ENCODE measurements at regions of chrX and their contacts with region 1.

Region 1: GRCh38 chrX:103686199-103687072 is at the start of gene MORF4L2:
- DNase-seq: peak; percentile 84 to 93 (median 87)
- H3K4me3 ChIP-seq: peak within 1 kb of the TSS; percentile 56
- H3K27ac ChIP-seq: peak within 1 kb of the TSS; percentile 91 to 92
- H3K4me1 ChIP-seq: no peaks in the 10 kb centered on the region
- H3K27me3 ChIP-seq: no peaks in the 10 kb centered on the region
- CTCF ChIP-seq: no peak
- EP300 ChIP-seq: peak; percentile 75
- POLR2A ChIP-seq: peak; percentile 89
- total RNA-seq, gene MORF4L2: 457 to 960 (median 603) TPM

Region 2: DNA sequence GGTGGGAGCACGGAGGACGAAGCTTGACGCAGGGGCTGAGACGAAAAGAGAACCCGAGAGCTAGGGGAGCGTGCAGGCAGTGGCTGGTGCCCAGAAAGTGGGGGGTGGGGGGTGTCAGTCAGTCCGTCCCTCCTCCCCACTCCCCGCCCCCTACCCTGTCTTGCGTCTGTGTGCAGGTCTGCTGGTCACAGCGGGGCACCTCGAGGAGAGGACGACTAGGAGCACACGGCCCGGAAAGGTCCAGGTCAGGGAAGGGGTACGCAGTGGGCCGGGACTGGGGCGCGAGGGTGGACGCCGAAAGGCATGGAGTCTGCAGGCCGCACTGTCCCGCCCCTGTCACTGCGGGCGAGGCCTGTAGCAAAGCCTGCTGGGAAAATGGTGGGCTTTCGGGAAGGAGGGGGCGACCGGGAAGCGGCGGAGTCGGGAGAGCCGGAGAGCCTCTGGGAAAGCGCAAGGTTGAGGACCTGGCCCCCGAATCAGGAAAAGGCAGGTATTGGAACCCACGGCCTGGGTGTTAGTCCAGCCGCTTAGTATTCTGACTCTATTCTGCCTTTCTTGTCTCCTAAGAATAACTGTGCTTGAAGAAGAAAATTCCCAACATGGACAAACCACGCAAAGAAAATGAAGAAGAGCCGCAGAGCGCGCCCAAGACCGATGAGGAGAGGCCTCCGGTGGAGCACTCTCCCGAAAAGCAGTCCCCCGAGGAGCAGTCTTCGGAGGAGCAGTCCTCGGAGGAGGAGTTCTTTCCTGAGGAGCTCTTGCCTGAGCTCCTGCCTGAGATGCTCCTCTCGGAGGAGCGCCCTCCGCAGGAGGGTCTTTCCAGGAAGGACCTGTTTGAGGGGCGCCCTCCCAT is 56.9 kb before region 1 on chrX:
- intact Hi-C with region 1: loop called in 3 of 4 experiments (anchors 10 kb)
- DNase-seq: peak; percentile 76 to 84 (median 77)
- H3K4me3 ChIP-seq: peak overlapping the region; percentile 59
- H3K27ac ChIP-seq: peak overlapping the region; percentile 92 to 94
- H3K4me1 ChIP-seq: no peaks in the 10 kb centered on the region
- H3K27me3 ChIP-seq: no peaks in the 10 kb centered on the region
- CTCF ChIP-seq: peak; percentile 28 to 51 (median 31)
- EP300 ChIP-seq: no peak
- POLR2A ChIP-seq: peak; percentile 40